HCT116 (cell line): ENCODE measurements at regions of chr1 and their contacts with region 1.

Region 1: DNA sequence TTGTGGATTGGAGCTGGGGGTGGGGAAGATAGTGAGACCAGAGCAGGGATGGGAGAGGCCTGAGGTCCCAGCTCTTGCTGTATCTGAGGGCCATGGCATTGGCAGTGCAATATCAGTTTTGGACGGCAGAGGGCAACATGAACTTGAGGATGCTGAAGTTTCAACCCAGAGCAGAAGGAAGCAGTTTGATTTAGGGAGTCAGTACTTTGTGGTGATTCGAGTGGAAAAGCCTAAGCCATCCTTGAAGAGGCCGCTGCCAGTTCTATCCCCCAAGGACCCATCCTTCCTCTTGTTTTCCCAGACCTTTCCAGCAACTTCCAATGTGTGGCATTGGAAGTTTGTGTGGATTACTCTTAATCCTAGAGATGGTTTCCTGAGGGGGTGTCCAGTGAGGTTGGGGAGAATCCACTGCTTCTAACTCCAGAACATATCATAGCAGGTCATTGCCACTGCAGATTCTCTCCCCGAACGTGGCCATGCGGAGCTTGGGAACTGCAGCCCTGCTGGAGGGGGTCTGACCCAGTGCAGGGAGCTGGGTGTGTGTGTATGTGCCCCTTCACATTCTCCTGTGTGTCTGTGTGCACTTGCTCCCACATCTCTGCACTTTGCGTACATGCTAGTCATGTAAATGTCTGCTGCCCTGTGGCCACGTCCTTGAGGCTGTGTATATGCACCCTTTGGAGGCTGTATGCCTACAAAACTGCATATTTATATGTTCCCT is 24.1 kb downstream of the SLC26A9 start:
- DNase-seq: peak; percentile 74
- ATAC-seq: peak; percentile 96
- H3K4me3 ChIP-seq: no peak overlapping the region
- H3K27ac ChIP-seq: no peak overlapping the region
- H3K4me1 ChIP-seq: no peaks in the 10 kb centered on the region
- H3K27me3 ChIP-seq: no peaks in the 10 kb centered on the region
- CTCF ChIP-seq: peak; percentile 86 to 94 (median 89)
- POLR2A ChIP-seq: no peak
- RAD21 ChIP-seq: peak; percentile 98

Region 2: DNA sequence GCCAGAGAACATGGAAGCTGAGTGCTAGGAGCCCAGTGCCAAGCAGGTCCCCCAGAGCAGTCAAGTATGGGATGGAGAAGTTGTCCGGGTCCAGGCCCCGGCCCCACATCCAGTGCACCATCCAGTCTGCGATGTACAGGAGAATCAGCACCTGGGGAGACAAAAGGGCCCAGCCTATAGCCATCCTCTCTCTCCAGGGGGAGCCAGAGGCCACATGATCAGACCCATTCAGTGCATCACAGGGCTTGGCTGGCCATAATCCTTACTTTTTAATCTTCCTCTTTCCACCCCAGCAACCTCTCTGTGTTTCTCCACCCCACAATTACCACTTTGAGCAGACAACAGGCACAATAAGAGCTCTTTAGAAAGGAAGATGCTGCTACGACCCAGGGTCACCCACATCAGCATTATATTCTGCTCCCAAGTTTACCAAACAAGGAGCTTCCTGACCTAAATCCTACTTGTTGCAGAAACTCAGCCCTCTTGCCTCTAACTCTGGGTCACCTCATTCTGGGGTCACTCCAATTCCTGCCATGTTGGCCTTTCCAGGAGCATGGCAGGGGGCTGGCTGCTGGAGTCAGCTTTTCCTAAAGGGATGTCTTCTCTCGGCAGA is 127.5 kb before region 1 on chr1:
- CTCF ChIA-PET with region 1: interaction called, 13 read pairs
- POLR2A ChIA-PET with region 1: no interaction called
- RAD21 ChIA-PET with region 1: interaction called, 3 to 5 read pairs
- intact Hi-C with region 1: no loop called
- DNase-seq: no peak
- ATAC-seq: peak; percentile 100
- H3K4me3 ChIP-seq: no peak overlapping the region
- H3K27ac ChIP-seq: no peak overlapping the region
- H3K4me1 ChIP-seq: no peaks in the 10 kb centered on the region
- H3K27me3 ChIP-seq: no peaks in the 10 kb centered on the region
- CTCF ChIP-seq: peak; percentile 78 to 83 (median 78)
- POLR2A ChIP-seq: no peak
- RAD21 ChIP-seq: peak; percentile 91

Region 3: GRCh38 chr1:205879975-205880374 is 39.2 kb before region 1 on chr1:
- CTCF ChIA-PET with region 1: no interaction called
- POLR2A ChIA-PET with region 1: no interaction called
- RAD21 ChIA-PET with region 1: no interaction called
- intact Hi-C with region 1: no loop called
- DNase-seq: no peak
- ATAC-seq: no peak
- H3K4me3 ChIP-seq: no peak overlapping the region
- H3K27ac ChIP-seq: no peak overlapping the region
- H3K4me1 ChIP-seq: no peaks in the 10 kb centered on the region
- H3K27me3 ChIP-seq: no peaks in the 10 kb centered on the region
- CTCF ChIP-seq: no peak
- POLR2A ChIP-seq: no peak
- RAD21 ChIP-seq: no peak

Region 4: DNA sequence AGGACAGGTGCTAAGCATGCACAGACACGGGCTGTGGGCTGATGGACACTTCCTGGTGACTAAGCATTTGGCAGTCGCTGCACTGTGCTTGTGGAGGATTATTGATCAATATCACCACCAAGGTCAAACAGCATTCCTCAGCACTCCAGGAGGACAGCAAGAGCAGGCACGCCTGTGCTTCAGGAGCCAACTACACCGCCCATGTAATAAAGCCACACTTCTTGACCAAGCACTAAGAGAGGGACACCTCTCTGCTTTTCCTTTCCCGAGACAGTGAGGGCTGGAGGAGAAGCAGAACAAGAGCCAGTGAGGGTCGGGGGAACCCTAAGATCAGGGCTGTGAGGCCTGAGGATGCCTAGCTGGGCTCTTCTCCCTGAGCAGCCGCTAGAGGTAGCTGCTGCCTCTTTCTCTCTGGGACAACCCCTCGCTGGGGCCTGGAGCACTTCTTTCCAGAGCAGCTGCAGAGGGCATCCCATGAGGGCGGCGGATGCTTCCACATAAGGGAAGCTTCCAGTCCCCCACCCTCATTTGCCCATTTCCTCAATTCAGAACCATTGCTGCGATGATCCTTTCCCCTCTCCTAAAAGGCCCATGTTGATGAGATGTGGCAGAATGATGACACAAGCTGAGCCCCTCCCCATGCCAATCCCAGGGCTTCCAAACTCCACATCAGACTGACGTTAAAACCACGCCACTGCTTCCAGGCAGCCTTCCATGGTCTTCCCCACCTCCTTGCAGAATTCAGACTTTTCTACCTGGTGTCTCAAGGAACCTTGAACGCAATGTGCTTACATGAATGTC is 64.9 kb after region 1 on chr1:
- CTCF ChIA-PET with region 1: interaction called, 339 read pairs
- POLR2A ChIA-PET with region 1: no interaction called
- RAD21 ChIA-PET with region 1: interaction called in 1 of 2 experiments, 5 read pairs
- intact Hi-C with region 1: no loop called
- DNase-seq: peak; percentile 44
- ATAC-seq: peak; percentile 97
- H3K4me3 ChIP-seq: no peak overlapping the region
- H3K27ac ChIP-seq: no peak overlapping the region
- H3K4me1 ChIP-seq: peaks cover 3 to 13% of the 10 kb centered on the region in 2 experiments
- H3K27me3 ChIP-seq: no peaks in the 10 kb centered on the region
- CTCF ChIP-seq: peak; percentile 84 to 90 (median 90)
- POLR2A ChIP-seq: no peak
- RAD21 ChIP-seq: peak; percentile 94

Region 5: DNA sequence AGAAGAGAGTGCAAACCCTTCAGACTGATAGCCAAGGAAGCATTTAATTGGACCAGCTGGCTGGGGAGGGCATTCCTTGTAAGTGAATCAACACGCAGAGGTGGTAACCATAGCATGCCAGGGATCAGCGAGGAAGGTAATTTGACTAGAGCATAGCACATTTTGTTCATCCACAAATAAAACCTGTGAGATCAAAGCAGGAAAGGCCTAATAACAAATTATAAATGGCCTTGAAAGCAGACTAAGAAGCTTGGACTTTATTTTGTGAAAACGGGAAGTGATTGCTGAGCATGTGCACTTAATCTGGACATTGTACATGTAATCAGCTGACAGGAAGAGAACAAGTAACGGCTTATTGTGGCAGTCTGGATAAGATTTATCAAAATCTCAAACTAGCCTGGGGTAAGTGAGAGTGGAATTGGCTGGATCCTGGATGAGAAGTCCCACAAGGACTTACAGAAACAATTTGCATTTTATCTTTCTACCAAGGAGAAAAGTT is 1390.6 kb after region 1 on chr1:
- CTCF ChIA-PET with region 1: no interaction called
- POLR2A ChIA-PET with region 1: no interaction called
- RAD21 ChIA-PET with region 1: no interaction called
- intact Hi-C with region 1: no loop called
- DNase-seq: peak; percentile 50
- ATAC-seq: peak; percentile 92
- H3K4me3 ChIP-seq: peak overlapping the region; percentile 17 to 42
- H3K27ac ChIP-seq: no peak overlapping the region
- H3K4me1 ChIP-seq: peaks cover 15 to 45% of the 10 kb centered on the region in 2 experiments
- H3K27me3 ChIP-seq: no peaks in the 10 kb centered on the region
- CTCF ChIP-seq: no peak
- POLR2A ChIP-seq: no peak
- RAD21 ChIP-seq: no peak